Colonic mucosa (tissue), 4 donors: ENCODE measurements at regions of chr19 and their contacts with region 1.

Region 1: GRCh38 chr19:49224856-49225255 is 67.3 kb downstream of the TRPM4 start:
- DNase-seq: peak; percentile 68
- H3K4me3 ChIP-seq: no peak overlapping the region
- H3K27ac ChIP-seq: no peak overlapping the region
- H3K4me1 ChIP-seq: no peaks in the 10 kb centered on the region
- H3K27me3 ChIP-seq: no peaks in the 10 kb centered on the region
- CTCF ChIP-seq: peak; percentile 41

Region 2: DNA sequence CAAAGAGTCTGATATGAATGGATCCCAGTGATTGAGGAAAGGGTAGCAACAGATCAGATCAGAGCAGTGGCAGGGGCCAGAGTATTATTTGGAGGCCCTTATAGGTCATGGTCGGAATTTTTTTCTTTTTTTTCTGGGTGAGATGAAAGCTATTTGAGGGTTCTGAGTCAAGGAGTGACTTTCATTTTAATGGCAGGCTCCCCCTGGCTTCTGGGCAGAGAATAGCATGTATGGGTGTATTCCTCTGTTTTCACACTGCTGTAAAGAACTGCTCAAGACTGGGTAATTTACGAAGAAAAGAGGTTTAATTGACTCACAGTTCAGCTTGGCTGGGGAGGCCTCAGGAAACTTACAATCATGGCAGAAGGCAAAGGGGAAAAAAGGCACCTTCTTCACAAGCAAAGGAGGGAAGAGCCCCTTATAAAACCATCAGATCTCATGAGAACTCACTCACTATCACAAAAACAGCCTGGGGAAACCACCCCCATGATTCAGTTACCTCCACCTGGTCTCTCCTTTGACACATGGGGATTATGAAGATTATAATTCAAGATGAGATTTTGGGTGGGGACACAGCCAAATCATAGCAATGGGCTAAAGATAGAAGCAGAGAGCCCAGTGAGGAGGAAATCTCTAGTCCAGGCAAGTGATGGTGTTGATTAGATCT is 103.2 kb after region 1 on chr19:
- intact Hi-C with region 1: loop called (anchors 10 kb)
- DNase-seq: peak; percentile 36
- H3K4me3 ChIP-seq: no peak overlapping the region
- H3K27ac ChIP-seq: no peak overlapping the region
- H3K4me1 ChIP-seq: no peaks in the 10 kb centered on the region
- H3K27me3 ChIP-seq: no peaks in the 10 kb centered on the region
- CTCF ChIP-seq: peak; percentile 60